Activated T-helper 2 cell treated with anti-CD3 and anti-CD28 coated beads, Interferon-gamma antibody, Interleukin-2, Interleukin-4, amounts not matched to agents 10 μg/mL and 5 μg/mL and 100 μg/mL, durations not matched to agents 14 hours and 24 hours and 36 hours (primary cell): ENCODE measurements at regions of chr2 and their contacts with region 1.

Region 1: GRCh38 chr2:206274434-206275268 is at the start of gene ZDBF2:
- DNase-seq: peak; percentile 48
- H3K4me3 Mint-ChIP-seq: peak within 1 kb of the TSS; percentile 87
- H3K27ac Mint-ChIP-seq: peak within 1 kb of the TSS; percentile 82
- H3K4me1 Mint-ChIP-seq: peaks cover 16% of the 10 kb centered on the region
- H3K27me3 Mint-ChIP-seq: peaks cover 64% of the 10 kb centered on the region
- total RNA-seq, gene ZDBF2: 10.8 TPM in 2 replicates

Region 2: GRCh38 chr2:206159346-206160124 is 115.1 kb before region 1 on chr2 and contains the starts of genes EEF1B2 and NDUFS1:
- intact Hi-C with region 1: loop called (anchors 2 kb)
- DNase-seq: peak; percentile 96
- H3K4me3 Mint-ChIP-seq: peak within 1 kb of the TSS; percentile 98
- H3K27ac Mint-ChIP-seq: peak within 1 kb of the TSS; percentile 98
- H3K4me1 Mint-ChIP-seq: peaks cover 36% of the 10 kb centered on the region
- H3K27me3 Mint-ChIP-seq: no peaks in the 10 kb centered on the region
- total RNA-seq, gene EEF1B2: 719 and 724 TPM in 2 replicates
- total RNA-seq, gene NDUFS1: 80.7 and 84.3 TPM in 2 replicates

Region 3: GRCh38 chr2:206249714-206250591 is 24.7 kb before region 1 on chr2:
- intact Hi-C with region 1: loop called (anchors 2 kb)
- DNase-seq: no peak
- H3K4me3 Mint-ChIP-seq: peak overlapping the region; percentile 72
- H3K27ac Mint-ChIP-seq: no peak overlapping the region
- H3K4me1 Mint-ChIP-seq: peaks cover 11% of the 10 kb centered on the region
- H3K27me3 Mint-ChIP-seq: peaks cover 44% of the 10 kb centered on the region

Region 4: GRCh38 chr2:206442833-206443734 is 168.4 kb after region 1 on chr2 and contains the start of gene ADAM23:
- intact Hi-C with region 1: loop called (anchors 5 kb)
- DNase-seq: peak; percentile 27
- H3K4me3 Mint-ChIP-seq: peak within 1 kb of the TSS; percentile 83
- H3K27ac Mint-ChIP-seq: no peak within 1 kb of the TSS
- H3K4me1 Mint-ChIP-seq: peaks cover 6% of the 10 kb centered on the region
- H3K27me3 Mint-ChIP-seq: peaks cover 74% of the 10 kb centered on the region
- total RNA-seq, gene ADAM23: 0.23 and 0.25 TPM in 2 replicates